Endothelial cell of umbilical vein (primary cell): ENCODE measurements at regions of chr11 and their contacts with region 1.

Region 1: GRCh38 chr11:93662177-93662575 is 694 bp downstream of the CEP295 start:
- DNase-seq: no peak
- H3K4me3 ChIP-seq: peak overlapping the region; percentile 29 to 100 (median 93)
- H3K27ac ChIP-seq: peak overlapping the region; percentile 37
- H3K4me1 ChIP-seq: peaks cover 9% of the 10 kb centered on the region
- H3K27me3 ChIP-seq: peaks cover 10 to 12% of the 10 kb centered on the region in 2 experiments
- CTCF ChIP-seq: no peak
- POLR2A ChIP-seq: no peak

Region 2: GRCh38 chr11:93784152-93784934 is 122.2 kb after region 1 on chr11 and contains the start of gene MED17:
- CTCF ChIA-PET with region 1: no interaction called
- POLR2A ChIA-PET with region 1: interaction called, 3 read pairs
- dilution Hi-C with region 1: no loop called
- intact Hi-C with region 1: loop called (anchors 1 kb)
- DNase-seq: peak; percentile 93
- H3K4me3 ChIP-seq: peak within 1 kb of the TSS; percentile 81 to 96 (median 85)
- H3K27ac ChIP-seq: peak within 1 kb of the TSS; percentile 87
- H3K4me1 ChIP-seq: peaks cover 22% of the 10 kb centered on the region
- H3K27me3 ChIP-seq: no peaks in the 10 kb centered on the region
- CTCF ChIP-seq: peak; percentile 16 to 32
- POLR2A ChIP-seq: peak; percentile 94
- total RNA-seq, gene MED17: 33.5 and 40.6 TPM in 2 replicates

Region 3: GRCh38 chr11:94020777-94021481 is 358.8 kb after region 1 on chr11 and contains the start of gene HEPHL1:
- CTCF ChIA-PET with region 1: no interaction called
- POLR2A ChIA-PET with region 1: no interaction called
- dilution Hi-C with region 1: no loop called
- intact Hi-C with region 1: no loop called
- DNase-seq: no peak
- H3K4me3 ChIP-seq: no peak within 1 kb of the TSS
- H3K27ac ChIP-seq: no peak within 1 kb of the TSS
- H3K4me1 ChIP-seq: no peaks in the 10 kb centered on the region
- H3K27me3 ChIP-seq: no peaks in the 10 kb centered on the region
- CTCF ChIP-seq: no peak
- POLR2A ChIP-seq: no peak
- total RNA-seq, gene HEPHL1: not detected in 2 replicates